ENCODE measurements at regions of chr2 and their contacts with region 1.

Region 1: DNA sequence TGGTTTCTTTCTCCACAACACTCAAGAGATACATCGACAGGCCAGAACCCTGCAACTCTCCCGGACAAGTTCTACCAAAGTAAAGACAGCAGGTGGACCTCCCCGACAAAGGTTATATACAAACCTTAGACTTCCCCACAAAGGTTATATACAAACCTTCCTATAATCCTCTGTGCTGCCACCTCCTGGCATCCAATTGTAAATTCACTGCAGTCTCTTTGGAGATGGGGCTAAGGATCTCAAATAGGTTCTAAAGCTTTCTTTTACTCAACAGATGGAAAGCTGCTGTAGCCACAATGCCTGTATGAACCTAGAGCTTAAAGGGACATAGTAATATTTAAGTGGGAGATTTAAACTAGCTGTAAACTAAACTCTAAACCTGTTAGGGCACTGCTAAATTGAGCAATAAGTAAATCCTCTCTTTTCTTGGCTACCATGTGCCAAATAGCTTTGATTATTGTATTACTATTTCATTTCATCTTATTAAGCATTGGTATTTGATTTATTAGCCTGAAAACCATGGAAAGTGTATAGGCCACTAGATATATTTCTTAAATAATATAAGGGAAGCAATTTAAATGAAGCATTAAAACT is 9.8 kb upstream of the MREG start:
- DNase-seq: peak; percentile 13 to 51 (median 28)
- H3K4me3 ChIP-seq: no peak overlapping the region
- H3K4me3 Mint-ChIP-seq: no peak overlapping the region
- H3K27ac ChIP-seq: no peak overlapping the region
- H3K27ac Mint-ChIP-seq: peak overlapping the region in 1 of 7 donors; percentile 57
- H3K4me1 ChIP-seq: no peaks in the 10 kb centered on the region
- H3K4me1 Mint-ChIP-seq: peaks cover 0 to 6% (median 3%) of the 10 kb centered on the region in 4 donors
- H3K27me3 ChIP-seq: no peaks in the 10 kb centered on the region
- H3K27me3 Mint-ChIP-seq: no peaks in the 10 kb centered on the region

Region 2: DNA sequence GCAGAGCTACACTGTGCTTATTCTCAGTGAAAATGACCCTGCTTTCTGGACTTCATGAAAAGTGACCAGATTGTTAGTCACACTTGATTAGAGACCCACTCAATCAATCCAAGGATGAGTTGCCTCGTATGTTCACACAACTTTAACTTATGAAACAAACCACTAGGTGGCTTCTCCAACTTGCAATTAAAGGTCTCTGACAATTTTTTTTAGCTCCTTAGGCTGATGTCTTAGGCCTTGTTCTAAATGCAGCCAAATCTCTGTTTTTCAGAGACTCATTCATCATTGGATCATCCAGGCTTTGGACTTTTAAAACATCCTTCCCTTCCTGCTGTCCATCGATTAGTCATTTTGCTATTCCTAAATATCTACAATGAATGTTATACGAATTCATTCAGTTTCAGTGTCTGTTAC is 73.2 kb before region 1 on chr2:
- CTCF ChIA-PET with region 1: interaction called, 67 read pairs
- POLR2A ChIA-PET with region 1: no interaction called
- intact Hi-C with region 1: loop called (anchors 1 kb)
- DNase-seq: peak in 4 of 5 donors; percentile 16 to 31 (median 22)
- H3K4me3 ChIP-seq: no peak overlapping the region
- H3K4me3 Mint-ChIP-seq: no peak overlapping the region
- H3K27ac ChIP-seq: no peak overlapping the region
- H3K27ac Mint-ChIP-seq: no peak overlapping the region
- H3K4me1 ChIP-seq: no peaks in the 10 kb centered on the region
- H3K4me1 Mint-ChIP-seq: peaks cover 0 to 4% (median 0%) of the 10 kb centered on the region in 4 donors
- H3K27me3 ChIP-seq: no peaks in the 10 kb centered on the region
- H3K27me3 Mint-ChIP-seq: no peaks in the 10 kb centered on the region

Region 3: GRCh38 chr2:216006164-216006663 is 16.9 kb before region 1 on chr2:
- CTCF ChIA-PET with region 1: interaction called, 27 read pairs
- POLR2A ChIA-PET with region 1: no interaction called
- intact Hi-C with region 1: no loop called
- DNase-seq: peak in 1 of 5 donors; percentile 46
- H3K4me3 ChIP-seq: no peak overlapping the region
- H3K4me3 Mint-ChIP-seq: peak overlapping the region in 7 of 8 donors; percentile 41 to 68 (median 63)
- H3K27ac ChIP-seq: no peak overlapping the region
- H3K27ac Mint-ChIP-seq: peak overlapping the region in 5 of 7 donors; percentile 31 to 77 (median 66)
- H3K4me1 ChIP-seq: peaks cover 39% of the 10 kb centered on the region
- H3K4me1 Mint-ChIP-seq: peaks cover 30 to 49% (median 38%) of the 10 kb centered on the region in 4 donors
- H3K27me3 ChIP-seq: no peaks in the 10 kb centered on the region
- H3K27me3 Mint-ChIP-seq: no peaks in the 10 kb centered on the region

Region 4: DNA sequence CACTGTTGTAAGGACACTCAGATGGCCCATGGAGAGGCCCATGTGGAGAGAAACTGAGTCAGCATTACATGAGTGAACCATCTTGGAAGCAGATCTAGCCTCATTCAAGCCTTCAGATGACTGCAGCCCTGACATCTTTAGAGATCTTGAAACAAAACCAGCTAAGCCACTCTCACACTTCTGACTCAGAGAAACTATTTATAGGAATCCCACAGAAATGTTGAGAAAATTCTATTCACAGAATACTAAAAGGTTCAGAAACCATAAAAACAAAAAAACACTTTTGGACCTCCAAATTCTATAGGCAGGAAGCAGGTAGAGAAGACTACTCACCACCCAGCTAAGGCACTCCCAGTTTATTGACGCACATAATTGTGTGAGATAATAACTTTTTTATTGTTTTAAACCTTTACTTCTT is 67.2 kb after region 1 on chr2:
- CTCF ChIA-PET with region 1: no interaction called
- POLR2A ChIA-PET with region 1: no interaction called
- intact Hi-C with region 1: no loop called
- DNase-seq: no peak
- H3K4me3 ChIP-seq: no peak overlapping the region
- H3K4me3 Mint-ChIP-seq: no peak overlapping the region
- H3K27ac ChIP-seq: no peak overlapping the region
- H3K27ac Mint-ChIP-seq: no peak overlapping the region
- H3K4me1 ChIP-seq: peaks cover 16% of the 10 kb centered on the region
- H3K4me1 Mint-ChIP-seq: peaks cover 6 to 16% (median 11%) of the 10 kb centered on the region in 4 donors
- H3K27me3 ChIP-seq: no peaks in the 10 kb centered on the region
- H3K27me3 Mint-ChIP-seq: no peaks in the 10 kb centered on the region

Measured in CD4-positive, alpha-beta memory T cell (primary cell).